ENCODE measurements at regions of chr2 and their contacts with region 1.

Region 1: GRCh38 chr2:88880441-88880953 is 189.0 kb downstream of the RPIA start:
- DNase-seq: peak; percentile 70
- H3K4me3 Mint-ChIP-seq: no peak overlapping the region
- H3K27ac Mint-ChIP-seq: no peak overlapping the region
- H3K4me1 Mint-ChIP-seq: no peaks in the 10 kb centered on the region
- H3K27me3 Mint-ChIP-seq: peaks cover 63% of the 10 kb centered on the region
- CTCF ChIP-seq: peak; percentile 70

Region 2: DNA sequence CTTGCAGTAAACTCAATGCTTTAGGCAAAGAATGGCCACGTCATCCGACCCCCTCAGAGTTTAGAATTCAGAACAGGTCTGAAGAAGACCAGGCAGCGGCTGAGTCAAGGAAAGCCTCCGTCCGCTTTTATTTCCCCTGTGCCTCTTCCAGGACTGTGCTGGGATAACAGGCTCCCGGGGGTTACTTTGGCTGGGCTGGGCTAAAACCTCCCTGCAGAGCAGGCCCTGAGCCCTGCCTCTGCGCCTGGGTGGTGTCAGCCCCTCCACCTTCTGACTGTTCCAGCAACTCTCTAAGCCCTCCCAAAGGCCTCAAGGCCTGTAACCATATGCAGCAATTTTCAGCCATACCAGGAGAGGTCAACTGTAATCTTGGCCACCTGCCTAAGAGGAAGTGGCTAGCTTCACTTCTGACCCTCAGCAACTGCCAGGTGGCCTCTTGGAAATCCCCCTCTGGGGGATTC is 22.5 kb before region 1 on chr2:
- CTCF ChIA-PET with region 1: interaction called, 15 read pairs
- POLR2A ChIA-PET with region 1: no interaction called
- intact Hi-C with region 1: no loop called
- DNase-seq: no peak
- H3K4me3 Mint-ChIP-seq: no peak overlapping the region
- H3K27ac Mint-ChIP-seq: no peak overlapping the region
- H3K4me1 Mint-ChIP-seq: no peaks in the 10 kb centered on the region
- H3K27me3 Mint-ChIP-seq: peaks cover 65% of the 10 kb centered on the region
- CTCF ChIP-seq: no peak

Region 3: GRCh38 chr2:88896971-88897370 is 16.5 kb after region 1 on chr2:
- CTCF ChIA-PET with region 1: interaction called, 16 read pairs
- POLR2A ChIA-PET with region 1: no interaction called
- intact Hi-C with region 1: no loop called
- DNase-seq: no peak
- H3K4me3 Mint-ChIP-seq: no peak overlapping the region
- H3K27ac Mint-ChIP-seq: no peak overlapping the region
- H3K4me1 Mint-ChIP-seq: no peaks in the 10 kb centered on the region
- H3K27me3 Mint-ChIP-seq: peaks cover 93% of the 10 kb centered on the region
- CTCF ChIP-seq: no peak

Region 4: DNA sequence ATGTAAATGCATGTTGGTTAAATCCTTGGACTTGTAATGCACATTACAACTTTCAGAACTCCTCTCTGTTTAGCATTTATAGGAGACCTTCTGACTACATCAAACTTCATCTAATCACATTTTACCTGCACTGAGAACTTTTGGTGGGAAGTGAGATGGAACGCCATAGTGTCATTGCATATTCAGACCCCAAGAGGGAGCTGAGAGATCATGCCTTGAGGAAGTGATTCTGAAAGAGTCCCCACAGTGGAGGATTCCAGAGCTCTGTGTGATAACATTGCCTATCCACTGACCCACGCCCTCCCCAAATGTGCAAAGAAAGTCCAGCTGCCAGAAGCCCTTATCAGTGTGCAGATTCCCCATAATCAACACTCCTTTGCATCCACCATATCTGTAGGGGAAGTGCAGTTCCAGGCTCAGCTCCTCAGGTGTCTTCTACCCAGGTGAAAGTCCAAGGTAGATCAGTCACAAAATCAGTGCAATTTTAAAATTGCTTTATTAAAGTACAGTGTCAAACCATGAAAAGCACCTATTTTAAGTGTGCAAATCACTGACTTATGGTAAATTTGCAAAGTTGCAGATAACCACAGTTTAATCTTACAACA is 23.4 kb after region 1 on chr2:
- CTCF ChIA-PET with region 1: interaction called, 13 read pairs
- POLR2A ChIA-PET with region 1: no interaction called
- intact Hi-C with region 1: no loop called
- DNase-seq: peak; percentile 51
- H3K4me3 Mint-ChIP-seq: no peak overlapping the region
- H3K27ac Mint-ChIP-seq: no peak overlapping the region
- H3K4me1 Mint-ChIP-seq: no peaks in the 10 kb centered on the region
- H3K27me3 Mint-ChIP-seq: peaks cover 91% of the 10 kb centered on the region
- CTCF ChIP-seq: peak; percentile 71

Region 5: GRCh38 chr2:88919087-88919738 is 38.7 kb after region 1 on chr2:
- CTCF ChIA-PET with region 1: interaction called, 10 read pairs
- POLR2A ChIA-PET with region 1: no interaction called
- intact Hi-C with region 1: loop called (anchors 2 kb)
- DNase-seq: peak; percentile 46
- H3K4me3 Mint-ChIP-seq: no peak overlapping the region
- H3K27ac Mint-ChIP-seq: peak overlapping the region; percentile 35
- H3K4me1 Mint-ChIP-seq: no peaks in the 10 kb centered on the region
- H3K27me3 Mint-ChIP-seq: peaks cover 64% of the 10 kb centered on the region
- CTCF ChIP-seq: peak; percentile 48

Region 6: GRCh38 chr2:88959480-88960220 is 79.2 kb after region 1 on chr2:
- CTCF ChIA-PET with region 1: interaction called, 10 read pairs
- POLR2A ChIA-PET with region 1: no interaction called
- intact Hi-C with region 1: no loop called
- DNase-seq: peak; percentile 24
- H3K4me3 Mint-ChIP-seq: no peak overlapping the region
- H3K27ac Mint-ChIP-seq: no peak overlapping the region
- H3K4me1 Mint-ChIP-seq: no peaks in the 10 kb centered on the region
- H3K27me3 Mint-ChIP-seq: peaks cover 54% of the 10 kb centered on the region
- CTCF ChIP-seq: peak; percentile 19